Astrocyte of the cerebellum (primary cell): ENCODE measurements at regions of chr7 and their contacts with region 1.

Region 1: GRCh38 chr7:141928146-141928844 is 12.1 kb downstream of the OR9A4 start:
- DNase-seq: no peak
- H3K4me3 ChIP-seq: no peak overlapping the region
- CTCF ChIP-seq: no peak

Region 2: DNA sequence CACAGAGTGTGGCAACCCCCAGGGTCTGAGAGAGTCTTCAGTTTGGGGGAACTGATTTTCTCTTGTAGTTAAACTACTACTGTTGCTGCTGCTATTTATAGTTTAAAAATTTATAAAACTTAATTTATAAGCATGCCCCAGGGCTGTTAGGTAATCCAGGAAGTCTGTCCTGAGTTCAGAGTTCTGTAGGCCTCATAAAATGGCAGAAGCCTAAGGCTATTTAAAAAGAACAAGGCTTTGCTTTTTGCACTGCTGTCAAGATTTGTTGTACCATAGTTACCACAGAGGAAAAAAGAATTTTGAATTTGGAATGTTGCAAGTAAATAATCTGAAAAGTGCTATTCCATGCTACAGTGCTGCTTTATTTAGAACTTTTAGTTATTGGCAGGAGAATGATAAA is 311.0 kb before region 1 on chr7:
- in situ Hi-C with region 1: no loop called
- DNase-seq: no peak
- H3K4me3 ChIP-seq: no peak overlapping the region
- CTCF ChIP-seq: no peak

Region 3: GRCh38 chr7:141864775-141865447 is 63.4 kb before region 1 on chr7:
- in situ Hi-C with region 1: loop called (anchors 10 kb)
- DNase-seq: no peak
- H3K4me3 ChIP-seq: no peak overlapping the region
- CTCF ChIP-seq: no peak